CD4-positive, alpha-beta memory T cell (primary cell): ENCODE measurements at regions of chr18 and their contacts with region 1.

Region 1: DNA sequence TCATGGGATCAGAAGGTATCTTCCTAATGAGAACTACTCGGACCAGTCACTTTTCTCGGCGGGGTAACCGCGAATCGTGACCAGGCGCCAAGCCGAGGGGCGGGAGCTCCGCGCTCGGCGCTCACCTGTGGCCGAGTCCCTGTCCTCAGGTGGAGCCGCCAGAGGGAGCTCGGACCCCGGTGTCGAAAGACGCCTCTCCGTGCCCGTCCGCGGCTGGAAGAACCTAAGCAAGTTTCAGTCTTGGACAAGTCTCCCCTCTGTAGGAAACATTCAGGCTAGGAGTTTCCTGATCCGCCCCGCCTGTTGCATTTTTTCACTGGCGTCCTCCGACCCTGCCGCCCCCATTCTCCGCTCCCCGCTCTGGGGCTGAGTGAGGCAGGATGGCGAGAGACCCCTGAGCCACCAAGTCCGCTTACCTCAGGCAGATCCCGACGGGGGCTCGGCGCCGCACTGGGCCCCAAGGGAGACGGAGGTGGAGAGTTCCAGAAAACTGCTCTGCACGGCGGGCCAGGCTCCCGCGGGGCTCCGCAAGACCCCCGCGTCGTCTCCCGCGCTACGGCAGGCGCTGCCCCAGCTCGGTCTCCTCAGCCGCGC is 478 bp downstream of the DSEL start:
- DNase-seq: peak; percentile 36 to 62 (median 44)
- H3K4me3 ChIP-seq: peak overlapping the region; percentile 58 to 59
- H3K4me3 Mint-ChIP-seq: peak overlapping the region; percentile 87 to 94 (median 92)
- H3K27ac ChIP-seq: peak overlapping the region; percentile 36
- H3K27ac Mint-ChIP-seq: peak overlapping the region in 6 of 7 donors; percentile 1 to 90 (median 86)
- H3K4me1 ChIP-seq: peaks cover 16% of the 10 kb centered on the region
- H3K4me1 Mint-ChIP-seq: peaks cover 14 to 30% (median 22%) of the 10 kb centered on the region in 4 donors
- H3K27me3 ChIP-seq: no peaks in the 10 kb centered on the region
- H3K27me3 Mint-ChIP-seq: no peaks in the 10 kb centered on the region

Region 2: GRCh38 chr18:66603941-66604627 is 912.0 kb before region 1 on chr18 and contains the start of gene CDH19:
- CTCF ChIA-PET with region 1: no interaction called
- POLR2A ChIA-PET with region 1: no interaction called
- intact Hi-C with region 1: no loop called
- DNase-seq: no peak
- H3K4me3 ChIP-seq: no peak within 1 kb of the TSS
- H3K4me3 Mint-ChIP-seq: no peak within 1 kb of the TSS
- H3K27ac ChIP-seq: no peak within 1 kb of the TSS
- H3K27ac Mint-ChIP-seq: no peak within 1 kb of the TSS
- H3K4me1 ChIP-seq: no peaks in the 10 kb centered on the region
- H3K4me1 Mint-ChIP-seq: no peaks in the 10 kb centered on the region
- H3K27me3 ChIP-seq: no peaks in the 10 kb centered on the region
- H3K27me3 Mint-ChIP-seq: no peaks in the 10 kb centered on the region
- total RNA-seq, gene CDH19: not detected

Region 3: DNA sequence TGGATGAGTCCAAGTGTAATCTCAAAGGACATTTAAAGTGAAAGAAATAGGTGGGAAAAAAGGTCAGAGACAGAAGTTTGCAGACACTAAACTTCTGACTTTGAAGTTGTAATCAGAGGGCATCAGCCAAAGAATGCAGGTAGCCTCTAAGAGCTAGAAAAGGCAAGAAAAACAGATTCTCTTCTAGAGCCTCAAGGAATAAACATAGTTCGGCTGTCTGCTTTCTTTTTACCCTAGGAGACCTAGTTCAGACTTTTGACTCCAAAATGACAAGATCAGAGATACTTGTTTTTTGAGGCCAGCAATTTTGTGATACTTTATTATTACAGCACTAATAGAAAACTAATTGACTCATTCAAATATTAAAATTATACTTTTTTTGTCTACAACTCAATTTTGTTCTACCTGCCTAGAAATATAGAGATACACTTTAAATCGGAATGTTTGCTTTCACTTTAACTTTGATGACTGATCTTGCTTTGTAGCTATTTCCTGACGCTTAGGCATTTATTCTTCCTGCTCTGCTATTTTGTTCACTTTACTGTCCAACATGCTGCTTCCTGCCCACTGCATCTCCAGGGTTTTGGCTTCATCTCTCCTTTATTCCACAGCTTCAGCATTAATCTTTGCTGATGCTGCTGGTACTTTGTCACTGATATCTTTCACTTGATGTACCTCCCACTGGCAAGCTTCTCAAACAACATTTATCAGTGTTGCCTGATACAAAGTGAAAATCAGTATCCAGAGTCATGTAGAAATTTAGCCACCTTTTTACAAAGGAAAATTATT is 272.0 kb before region 1 on chr18:
- CTCF ChIA-PET with region 1: no interaction called
- POLR2A ChIA-PET with region 1: no interaction called
- intact Hi-C with region 1: loop called (anchors 10 kb)
- DNase-seq: peak in 1 of 5 donors; percentile 7
- H3K4me3 ChIP-seq: peak overlapping the region in 1 of 2 donors; percentile 13
- H3K4me3 Mint-ChIP-seq: peak overlapping the region; percentile 81 to 93 (median 89)
- H3K27ac ChIP-seq: peak overlapping the region; percentile 22
- H3K27ac Mint-ChIP-seq: peak overlapping the region; percentile 19 to 94 (median 62)
- H3K4me1 ChIP-seq: peaks cover 19% of the 10 kb centered on the region
- H3K4me1 Mint-ChIP-seq: peaks cover 17 to 37% (median 24%) of the 10 kb centered on the region in 4 donors
- H3K27me3 ChIP-seq: no peaks in the 10 kb centered on the region
- H3K27me3 Mint-ChIP-seq: no peaks in the 10 kb centered on the region

Region 4: DNA sequence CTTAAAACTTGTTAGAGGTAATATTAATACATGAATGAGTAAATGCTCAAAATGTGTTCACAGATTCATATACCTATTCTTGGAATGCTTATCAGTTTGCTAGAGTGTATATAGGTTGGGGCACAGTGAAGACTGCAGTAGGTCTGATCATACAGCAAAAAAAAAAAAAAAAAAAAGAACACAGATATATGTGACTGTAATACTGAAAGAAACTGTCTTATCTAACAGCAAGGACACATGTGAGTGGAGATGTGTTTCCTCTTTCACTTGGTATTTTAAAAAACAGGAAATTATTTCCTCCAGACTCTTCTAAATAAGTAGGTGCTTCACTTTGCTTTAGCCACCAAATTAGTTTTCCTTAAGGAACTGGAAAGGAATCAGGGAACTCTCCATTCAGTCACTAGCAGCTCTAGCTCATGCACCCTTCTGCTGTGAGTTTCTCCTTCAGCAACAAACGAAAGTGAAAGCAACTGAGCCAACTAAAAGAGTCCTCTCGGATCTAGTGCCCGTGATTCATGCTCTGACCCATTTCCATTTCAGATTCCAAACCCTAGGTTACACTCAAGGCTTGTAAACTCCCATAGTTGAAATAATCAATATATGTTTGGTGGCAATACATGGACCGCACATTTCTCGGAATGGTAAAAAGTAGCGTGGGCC is 98.0 kb before region 1 on chr18:
- CTCF ChIA-PET with region 1: no interaction called
- POLR2A ChIA-PET with region 1: no interaction called
- intact Hi-C with region 1: loop called (anchors 5 kb)
- DNase-seq: peak; percentile 31 to 45 (median 41)
- H3K4me3 ChIP-seq: peak overlapping the region; percentile 15 to 50
- H3K4me3 Mint-ChIP-seq: peak overlapping the region; percentile 73 to 85 (median 78)
- H3K27ac ChIP-seq: peak overlapping the region; percentile 6
- H3K27ac Mint-ChIP-seq: peak overlapping the region; percentile 8 to 79 (median 73)
- H3K4me1 ChIP-seq: peaks cover 6% of the 10 kb centered on the region
- H3K4me1 Mint-ChIP-seq: peaks cover 3 to 19% (median 9%) of the 10 kb centered on the region in 4 donors
- H3K27me3 ChIP-seq: no peaks in the 10 kb centered on the region
- H3K27me3 Mint-ChIP-seq: no peaks in the 10 kb centered on the region

Region 5: GRCh38 chr18:67483237-67483636 is 32.8 kb before region 1 on chr18:
- CTCF ChIA-PET with region 1: no interaction called
- POLR2A ChIA-PET with region 1: no interaction called
- intact Hi-C with region 1: no loop called
- DNase-seq: no peak
- H3K4me3 ChIP-seq: no peak overlapping the region
- H3K4me3 Mint-ChIP-seq: no peak overlapping the region
- H3K27ac ChIP-seq: no peak overlapping the region
- H3K27ac Mint-ChIP-seq: no peak overlapping the region
- H3K4me1 ChIP-seq: no peaks in the 10 kb centered on the region
- H3K4me1 Mint-ChIP-seq: no peaks in the 10 kb centered on the region
- H3K27me3 ChIP-seq: no peaks in the 10 kb centered on the region
- H3K27me3 Mint-ChIP-seq: peaks cover 0 to 5% of the 10 kb centered on the region in 2 donors